Vagina (tissue), 2 donors: ENCODE measurements at regions of chr7 and their contacts with region 1.

Region 1: GRCh38 chr7:100803398-100804233 is 23.7 kb downstream of the EPHB4 start:
- DNase-seq: no peak
- H3K4me3 ChIP-seq: no peak overlapping the region
- H3K27ac ChIP-seq: peak overlapping the region; percentile 76
- H3K4me1 ChIP-seq: peaks cover 60% of the 10 kb centered on the region
- H3K27me3 ChIP-seq: no peaks in the 10 kb centered on the region
- CTCF ChIP-seq: no peak
- POLR2A ChIP-seq: no peak

Region 2: DNA sequence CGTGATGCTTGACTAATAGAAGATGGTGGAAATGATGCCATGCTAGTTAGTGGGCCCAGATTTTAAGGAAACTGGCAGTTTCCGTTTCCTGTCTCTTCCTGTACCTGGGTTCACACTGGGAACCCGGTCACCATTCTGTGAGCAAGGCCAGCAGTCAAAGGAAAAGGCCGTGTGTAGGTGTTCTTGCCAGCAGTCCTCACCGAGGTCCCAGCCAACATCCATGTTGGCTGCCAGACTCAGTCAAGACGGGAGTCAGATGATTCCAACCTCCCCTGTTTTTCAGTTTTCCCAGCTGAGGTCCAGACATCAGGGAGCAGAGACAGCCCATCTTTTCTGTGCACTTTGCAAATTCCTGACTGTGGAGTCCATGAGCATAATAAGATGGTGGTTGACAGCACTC is 460.9 kb before region 1 on chr7:
- intact Hi-C with region 1: no loop called
- DNase-seq: no peak
- H3K4me3 ChIP-seq: no peak overlapping the region
- H3K27ac ChIP-seq: no peak overlapping the region
- H3K4me1 ChIP-seq: peaks cover 12% of the 10 kb centered on the region
- H3K27me3 ChIP-seq: no peaks in the 10 kb centered on the region
- CTCF ChIP-seq: no peak
- POLR2A ChIP-seq: no peak

Region 3: GRCh38 chr7:100837099-100837836 is 33.7 kb after region 1 on chr7:
- intact Hi-C with region 1: loop called (anchors 5 kb)
- DNase-seq: no peak
- H3K4me3 ChIP-seq: peak overlapping the region; percentile 31 to 38
- H3K27ac ChIP-seq: peak overlapping the region; percentile 68
- H3K4me1 ChIP-seq: peaks cover 12% of the 10 kb centered on the region
- H3K27me3 ChIP-seq: no peaks in the 10 kb centered on the region
- CTCF ChIP-seq: no peak
- POLR2A ChIP-seq: no peak

Region 4: GRCh38 chr7:100852048-100852872 is 48.6 kb after region 1 on chr7 and contains the start of gene SLC12A9:
- intact Hi-C with region 1: loop called (anchors 5 kb)
- DNase-seq: no peak
- H3K4me3 ChIP-seq: peak within 1 kb of the TSS; percentile 58 to 67
- H3K27ac ChIP-seq: peak within 1 kb of the TSS; percentile 7
- H3K4me1 ChIP-seq: peaks cover 28% of the 10 kb centered on the region
- H3K27me3 ChIP-seq: no peaks in the 10 kb centered on the region
- CTCF ChIP-seq: peak; percentile 74 to 99 (median 93)
- POLR2A ChIP-seq: peak in 1 of 2 donors; percentile 38
- total RNA-seq, gene SLC12A9: 15.7 TPM